Astrocyte of the cerebellum (primary cell): ENCODE measurements at regions of chr14 and their contacts with region 1.

Region 1: GRCh38 chr14:64012720-64013119 is 159.9 kb downstream of the SYNE2 start:
- DNase-seq: no peak
- H3K4me3 ChIP-seq: no peak overlapping the region
- CTCF ChIP-seq: no peak

Region 2: DNA sequence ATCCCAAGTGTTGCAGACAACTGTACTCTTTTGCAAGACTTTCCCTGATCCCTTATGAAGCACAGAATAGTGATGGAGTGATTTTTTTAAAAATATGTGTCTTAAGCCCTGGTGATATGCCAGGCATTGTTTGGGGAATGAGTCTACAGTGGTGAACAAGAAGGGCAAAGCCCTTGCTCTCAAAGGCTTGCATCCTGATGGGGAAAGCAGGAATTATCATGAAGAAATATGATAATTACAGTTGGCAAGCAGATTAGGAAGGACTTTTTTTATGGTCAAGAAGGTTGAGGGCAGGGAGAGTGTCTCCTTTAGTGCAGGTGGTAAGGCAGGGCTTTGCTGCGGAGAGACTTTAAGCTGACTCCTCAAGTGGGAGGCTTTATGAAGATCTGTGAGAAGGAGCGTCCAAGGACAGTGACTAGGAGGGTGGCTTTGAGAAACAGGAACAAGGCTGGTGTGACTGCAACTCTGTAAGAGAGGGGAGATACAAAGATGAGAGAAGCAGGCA is 59.7 kb before region 1 on chr14:
- in situ Hi-C with region 1: loop called (anchors 5 kb)
- DNase-seq: no peak
- H3K4me3 ChIP-seq: no peak overlapping the region
- CTCF ChIP-seq: no peak

Region 3: DNA sequence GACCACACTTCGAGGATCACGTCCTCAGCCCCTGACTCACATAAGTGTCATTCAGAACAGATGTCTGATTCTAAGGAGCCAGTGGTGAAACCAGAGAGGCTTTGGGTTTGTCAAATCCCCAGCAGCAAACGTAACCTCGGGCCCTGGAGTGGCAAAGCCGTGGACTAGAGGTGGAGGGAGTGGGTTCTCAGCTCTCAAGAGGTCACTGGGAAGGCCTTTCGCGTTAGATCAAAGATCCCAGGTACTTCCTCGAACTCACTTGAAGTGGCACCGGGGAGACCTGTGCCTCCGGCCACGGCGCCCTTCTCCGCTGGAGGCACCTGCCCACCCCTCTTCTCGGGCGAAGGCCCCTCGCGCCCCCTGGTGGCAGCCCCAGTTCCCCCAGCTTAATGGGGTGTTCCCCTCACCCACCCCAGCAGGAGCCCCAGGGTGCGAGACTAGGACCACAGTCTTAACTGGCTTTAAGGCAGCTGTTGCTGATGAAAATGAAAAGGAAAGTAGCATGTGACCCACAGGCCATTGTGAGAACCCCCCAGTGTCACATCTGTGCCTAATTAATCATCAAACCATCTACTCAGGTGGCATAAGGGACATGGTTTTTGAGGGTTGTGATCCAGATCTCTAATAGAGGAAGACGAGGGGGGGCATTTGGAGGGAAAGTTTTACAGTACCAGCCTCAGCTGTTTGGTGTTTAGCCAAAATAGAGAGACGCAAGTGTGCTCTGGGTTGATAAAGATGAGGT is 282.1 kb after region 1 on chr14:
- in situ Hi-C with region 1: loop called (anchors 5 kb)
- DNase-seq: no peak
- H3K4me3 ChIP-seq: peak overlapping the region; percentile 39
- CTCF ChIP-seq: peak; percentile 78